ENCODE measurements at regions of chr16 and their contacts with region 1.

Region 1: DNA sequence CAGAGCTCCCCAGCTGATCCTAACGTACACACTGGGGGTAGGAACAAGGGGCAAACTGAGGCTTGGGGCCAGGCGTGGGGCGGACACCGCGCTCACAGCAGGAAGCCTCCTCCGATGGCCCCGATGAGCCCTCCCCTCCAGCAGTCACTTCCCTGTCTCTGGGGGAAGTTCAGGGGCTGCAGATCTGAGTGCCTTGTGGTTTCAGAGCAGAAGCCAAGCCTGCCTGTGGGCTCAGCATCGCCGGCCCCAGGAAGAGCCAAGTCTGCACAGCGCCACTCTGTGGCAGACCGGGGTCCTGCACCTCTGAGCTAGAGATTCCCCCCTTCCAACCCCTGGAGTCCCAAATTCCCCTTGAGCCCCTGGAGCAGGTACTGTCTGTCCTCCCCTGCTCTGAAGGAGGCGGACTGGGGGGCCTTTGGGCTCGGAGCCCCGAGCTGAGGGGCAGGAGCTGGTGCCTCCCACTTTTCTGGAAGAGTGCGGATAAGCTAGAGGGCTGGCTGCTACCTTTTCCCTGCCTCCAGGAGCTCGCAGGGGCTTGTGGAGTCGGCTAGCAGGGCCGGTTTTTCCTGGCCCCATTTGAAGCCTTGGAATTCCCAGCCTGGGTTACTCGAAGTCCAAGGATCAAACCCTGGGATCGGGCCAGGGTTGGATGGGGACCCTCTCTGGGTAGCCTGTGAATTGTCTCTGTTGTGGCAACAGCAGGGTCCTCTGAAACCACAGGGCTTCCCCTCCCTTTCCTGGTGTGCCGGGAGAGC is 2.9 kb downstream of the GSE1 start:
- DNase-seq: peak; percentile 92
- ATAC-seq: peak; percentile 23
- H3K4me3 Mint-ChIP-seq: peak overlapping the region; percentile 64
- H3K27ac Mint-ChIP-seq: no peak overlapping the region; the same call in 1 of the 2 replicates
- H3K4me1 Mint-ChIP-seq: peaks cover 50% of the 10 kb centered on the region
- H3K27me3 Mint-ChIP-seq: no peaks in the 10 kb centered on the region
- CTCF ChIP-seq: peak; percentile 97

Region 2: GRCh38 chr16:85402910-85403692 is 212.9 kb before region 1 on chr16:
- CTCF ChIA-PET with region 1: interaction called, 14 read pairs
- POLR2A ChIA-PET with region 1: no interaction called
- DNase-seq: peak; percentile 42
- ATAC-seq: peak; percentile 22
- H3K4me3 Mint-ChIP-seq: no peak overlapping the region
- H3K27ac Mint-ChIP-seq: no peak overlapping the region
- H3K4me1 Mint-ChIP-seq: peaks cover 19% of the 10 kb centered on the region
- H3K27me3 Mint-ChIP-seq: no peaks in the 10 kb centered on the region
- CTCF ChIP-seq: no peak

Region 3: GRCh38 chr16:85448557-85449197 is 167.4 kb before region 1 on chr16:
- CTCF ChIA-PET with region 1: interaction called, 32 read pairs
- POLR2A ChIA-PET with region 1: no interaction called
- DNase-seq: no peak
- ATAC-seq: peak; percentile 26
- H3K4me3 Mint-ChIP-seq: no peak overlapping the region
- H3K27ac Mint-ChIP-seq: no peak overlapping the region
- H3K4me1 Mint-ChIP-seq: peaks cover 13% of the 10 kb centered on the region
- H3K27me3 Mint-ChIP-seq: no peaks in the 10 kb centered on the region
- CTCF ChIP-seq: no peak

Region 4: GRCh38 chr16:85514595-85515318 is 101.3 kb before region 1 on chr16:
- CTCF ChIA-PET with region 1: interaction called, 20 read pairs
- POLR2A ChIA-PET with region 1: no interaction called
- DNase-seq: no peak
- ATAC-seq: no peak
- H3K4me3 Mint-ChIP-seq: no peak overlapping the region
- H3K27ac Mint-ChIP-seq: peak overlapping the region; percentile 72; the same call in 1 of the 2 replicates
- H3K4me1 Mint-ChIP-seq: peaks cover 22% of the 10 kb centered on the region
- H3K27me3 Mint-ChIP-seq: no peaks in the 10 kb centered on the region
- CTCF ChIP-seq: no peak

Region 5: DNA sequence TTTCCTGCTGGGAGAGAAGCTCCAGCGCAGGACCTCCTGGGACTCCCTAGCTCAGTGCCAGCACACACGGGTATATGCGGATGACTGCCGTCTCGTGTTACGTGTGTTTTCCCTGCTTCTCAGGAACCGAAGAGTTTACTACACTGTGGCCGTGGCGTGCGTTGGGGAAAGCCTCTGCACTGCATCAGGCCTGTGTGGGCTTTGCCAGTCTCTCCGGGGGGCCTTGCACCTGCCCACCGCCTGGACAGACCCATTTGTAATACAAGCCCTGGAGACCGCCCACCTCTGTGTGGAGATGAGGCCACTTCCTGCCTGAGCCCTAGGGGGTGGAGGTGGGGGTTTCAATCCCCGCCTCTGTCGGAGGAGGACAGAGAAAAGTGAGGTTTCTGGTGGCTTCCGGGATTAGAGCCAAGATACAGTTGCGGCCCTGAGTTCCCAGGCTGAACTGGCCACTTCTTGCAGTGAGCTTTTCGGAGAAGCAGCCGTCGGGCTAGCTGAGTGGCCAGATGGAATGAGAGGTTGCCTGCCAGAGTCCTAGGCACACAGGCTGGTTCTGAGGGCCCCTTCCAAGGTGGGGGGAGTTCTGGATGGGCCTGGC is 46.3 kb before region 1 on chr16:
- CTCF ChIA-PET with region 1: interaction called, 17 read pairs
- POLR2A ChIA-PET with region 1: interaction called, 7 read pairs
- DNase-seq: no peak
- ATAC-seq: peak; percentile 63
- H3K4me3 Mint-ChIP-seq: no peak overlapping the region
- H3K27ac Mint-ChIP-seq: peak overlapping the region; percentile 95
- H3K4me1 Mint-ChIP-seq: peaks cover 78% of the 10 kb centered on the region
- H3K27me3 Mint-ChIP-seq: no peaks in the 10 kb centered on the region
- CTCF ChIP-seq: no peak

Region 6: DNA sequence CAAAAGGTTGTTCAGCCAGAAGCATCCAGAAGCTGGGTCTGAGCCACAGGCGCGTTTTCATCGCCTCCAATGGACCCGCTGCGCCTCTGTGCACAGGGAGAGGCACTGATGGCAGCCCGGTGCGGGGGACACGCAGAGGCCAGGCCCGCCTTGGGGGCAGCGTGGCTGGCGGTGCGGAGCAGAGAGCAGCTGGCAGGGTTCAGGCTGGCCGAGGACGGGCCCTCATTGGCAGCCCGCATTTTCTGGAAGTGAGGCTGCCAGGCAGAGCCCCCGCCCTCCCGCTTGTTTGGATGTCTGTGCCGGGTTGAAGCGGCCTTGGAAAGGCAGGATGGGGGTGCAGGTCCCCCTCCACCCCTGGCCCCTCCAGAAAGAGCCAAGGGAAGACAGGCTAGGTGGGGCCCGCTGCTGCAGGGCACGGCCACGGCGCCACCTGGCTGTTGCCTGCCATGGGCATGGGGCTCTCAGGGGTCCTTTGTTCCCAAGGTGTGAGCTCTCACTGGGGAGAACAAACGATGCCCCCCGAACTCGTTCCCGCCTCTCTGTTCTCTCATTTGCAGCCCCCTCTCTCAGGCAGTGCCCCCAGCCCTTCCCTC is 15.9 kb after region 1 on chr16:
- CTCF ChIA-PET with region 1: interaction called, 115 read pairs
- POLR2A ChIA-PET with region 1: interaction called, 3 read pairs
- DNase-seq: no peak
- ATAC-seq: 0 out of 2 replicates have a peak, but pooled peaks have one; percentile 16
- H3K4me3 Mint-ChIP-seq: no peak overlapping the region
- H3K27ac Mint-ChIP-seq: no peak overlapping the region
- H3K4me1 Mint-ChIP-seq: peaks cover 10% of the 10 kb centered on the region
- H3K27me3 Mint-ChIP-seq: no peaks in the 10 kb centered on the region
- CTCF ChIP-seq: no peak

Region 7: GRCh38 chr16:85675251-85675927 is 59.4 kb after region 1 on chr16:
- CTCF ChIA-PET with region 1: no interaction called
- POLR2A ChIA-PET with region 1: no interaction called
- DNase-seq: no peak
- ATAC-seq: peak; percentile 53
- H3K4me3 Mint-ChIP-seq: no peak overlapping the region
- H3K27ac Mint-ChIP-seq: no peak overlapping the region
- H3K4me1 Mint-ChIP-seq: no peaks in the 10 kb centered on the region
- H3K27me3 Mint-ChIP-seq: no peaks in the 10 kb centered on the region
- CTCF ChIP-seq: no peak

Region 8: GRCh38 chr16:85853547-85854545 is 237.8 kb after region 1 on chr16:
- CTCF ChIA-PET with region 1: no interaction called
- POLR2A ChIA-PET with region 1: no interaction called
- DNase-seq: no peak
- ATAC-seq: no peak
- H3K4me3 Mint-ChIP-seq: no peak overlapping the region
- H3K27ac Mint-ChIP-seq: no peak overlapping the region
- H3K4me1 Mint-ChIP-seq: peaks cover 9% of the 10 kb centered on the region
- H3K27me3 Mint-ChIP-seq: peaks cover 3% of the 10 kb centered on the region
- CTCF ChIP-seq: no peak

Region 9: GRCh38 chr16:85928401-85928820 is 312.4 kb after region 1 on chr16:
- CTCF ChIA-PET with region 1: no interaction called
- POLR2A ChIA-PET with region 1: no interaction called
- DNase-seq: no peak
- ATAC-seq: no peak
- H3K4me3 Mint-ChIP-seq: no peak overlapping the region
- H3K27ac Mint-ChIP-seq: no peak overlapping the region
- H3K4me1 Mint-ChIP-seq: peaks cover 9% of the 10 kb centered on the region
- H3K27me3 Mint-ChIP-seq: no peaks in the 10 kb centered on the region
- CTCF ChIP-seq: no peak